Activated T-helper 1 cell treated with anti-CD3 and anti-CD28 coated beads, Interleukin-12 subunit alpha, Interleukin-12 subunit beta, Interleukin-2, Interleukin-4 antibody, amounts not matched to agents 30 ng/mL and 10 ng/mL and 1 ng/mL, durations not matched to agents 14 hours and 24 hours and 36 hours (primary cell): ENCODE measurements at regions of chr15 and their contacts with region 1.

Region 1: DNA sequence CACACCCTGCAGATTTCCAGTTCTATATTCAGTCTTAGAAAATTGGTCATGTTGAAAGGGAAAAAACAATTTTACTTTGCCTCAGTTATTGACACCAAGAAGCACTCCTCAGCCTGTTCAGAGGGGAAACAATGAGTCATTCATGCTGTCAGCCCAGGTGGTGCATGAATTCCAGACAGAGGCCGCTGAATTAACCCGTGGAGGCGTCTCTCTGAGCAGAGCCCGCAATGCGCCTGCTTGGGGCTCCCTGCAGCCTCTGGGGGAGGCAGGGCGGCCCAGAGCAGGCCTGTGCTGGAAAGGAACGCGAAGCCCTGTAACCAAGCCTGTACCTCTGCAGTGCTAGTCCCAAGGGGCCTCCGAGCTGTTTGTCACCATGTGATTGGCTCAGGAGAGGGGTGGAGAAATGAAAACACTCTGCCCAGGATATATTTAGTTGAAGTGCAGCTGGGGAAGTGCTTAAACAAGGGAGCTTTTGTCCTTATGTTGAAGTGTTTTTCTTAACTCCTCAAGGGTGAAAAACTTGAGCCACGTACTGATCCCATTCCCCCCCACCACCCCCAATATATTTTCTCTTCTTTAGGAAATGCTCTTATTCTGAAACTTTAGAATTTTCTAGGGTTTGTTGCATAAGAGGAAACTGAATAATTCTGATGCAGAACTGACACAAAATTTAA is 68.3 kb upstream of the CHD2 start:
- DNase-seq: peak; percentile 90
- H3K4me3 Mint-ChIP-seq: peak overlapping the region; percentile 74
- H3K27ac Mint-ChIP-seq: peak overlapping the region; percentile 99
- H3K4me1 Mint-ChIP-seq: peaks cover 50% of the 10 kb centered on the region
- H3K27me3 Mint-ChIP-seq: no peaks in the 10 kb centered on the region

Region 2: GRCh38 chr15:92803847-92804609 is 27.8 kb before region 1 on chr15:
- intact Hi-C with region 1: loop called (anchors 1 kb)
- DNase-seq: peak; percentile 59
- H3K4me3 Mint-ChIP-seq: peak overlapping the region; percentile 29
- H3K27ac Mint-ChIP-seq: peak overlapping the region; percentile 84
- H3K4me1 Mint-ChIP-seq: peaks cover 45% of the 10 kb centered on the region
- H3K27me3 Mint-ChIP-seq: no peaks in the 10 kb centered on the region

Region 3: GRCh38 chr15:92808978-92809879 is 22.6 kb before region 1 on chr15:
- intact Hi-C with region 1: loop called (anchors 1 kb)
- DNase-seq: peak; percentile 100
- H3K4me3 Mint-ChIP-seq: peak overlapping the region; percentile 94
- H3K27ac Mint-ChIP-seq: peak overlapping the region; percentile 98
- H3K4me1 Mint-ChIP-seq: peaks cover 60% of the 10 kb centered on the region
- H3K27me3 Mint-ChIP-seq: no peaks in the 10 kb centered on the region

Region 4: GRCh38 chr15:92820236-92821021 is 11.4 kb before region 1 on chr15:
- intact Hi-C with region 1: loop called (anchors 1 kb)
- DNase-seq: peak; percentile 86
- H3K4me3 Mint-ChIP-seq: peak overlapping the region; percentile 86
- H3K27ac Mint-ChIP-seq: peak overlapping the region; percentile 96
- H3K4me1 Mint-ChIP-seq: peaks cover 58% of the 10 kb centered on the region
- H3K27me3 Mint-ChIP-seq: no peaks in the 10 kb centered on the region

Region 5: GRCh38 chr15:92845126-92845508 is 13.3 kb after region 1 on chr15:
- intact Hi-C with region 1: loop called (anchors 1 kb)
- DNase-seq: no peak
- H3K4me3 Mint-ChIP-seq: peak overlapping the region; percentile 77
- H3K27ac Mint-ChIP-seq: peak overlapping the region; percentile 96
- H3K4me1 Mint-ChIP-seq: peaks cover 68% of the 10 kb centered on the region
- H3K27me3 Mint-ChIP-seq: no peaks in the 10 kb centered on the region

Region 6: DNA sequence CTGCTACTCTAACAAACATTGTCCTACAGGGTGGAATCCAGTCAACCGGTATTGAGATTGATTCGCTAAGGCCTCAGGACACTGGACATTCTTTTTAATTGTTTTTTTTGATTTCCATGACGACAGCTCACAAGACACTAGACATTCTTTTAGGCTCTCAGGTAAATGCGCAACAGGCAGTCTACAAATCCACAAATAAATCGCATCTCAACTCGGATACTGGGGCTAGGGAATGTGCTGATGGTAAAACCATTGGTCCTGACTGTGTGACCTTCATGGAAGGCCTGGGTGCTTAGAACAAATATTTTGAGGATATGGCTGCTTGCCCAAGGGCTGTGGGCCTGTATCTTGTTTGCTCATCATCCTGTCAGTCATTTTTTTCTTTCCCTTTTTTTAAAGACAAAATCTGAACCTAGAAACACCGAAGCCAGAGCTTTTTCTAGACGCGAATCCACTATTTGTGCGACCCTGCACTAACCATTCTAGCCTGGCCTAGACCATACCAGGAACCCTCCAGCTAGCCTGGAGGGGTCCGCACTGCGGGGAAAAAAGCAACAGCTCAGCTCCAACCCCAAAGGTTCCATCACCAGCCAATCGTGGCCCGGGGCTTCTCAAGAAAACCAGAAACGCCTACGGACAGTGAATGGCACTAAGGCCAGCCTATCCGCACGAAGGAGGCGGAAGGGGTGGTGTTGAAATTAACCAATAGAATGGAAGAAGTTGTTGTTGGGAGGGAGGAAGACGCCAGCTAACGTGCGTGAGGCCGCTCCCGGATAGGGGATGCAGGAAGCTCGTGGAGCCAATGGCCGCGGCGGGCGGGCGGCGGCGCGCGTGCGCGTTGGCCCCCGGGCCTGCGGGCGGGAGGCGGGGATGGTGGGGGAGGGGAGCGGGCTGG is 50.3 kb after region 1 on chr15:
- intact Hi-C with region 1: loop called (anchors 1 kb)
- DNase-seq: peak; percentile 97
- H3K4me3 Mint-ChIP-seq: peak overlapping the region; percentile 87
- H3K27ac Mint-ChIP-seq: peak overlapping the region; percentile 97
- H3K4me1 Mint-ChIP-seq: peaks cover 60% of the 10 kb centered on the region
- H3K27me3 Mint-ChIP-seq: no peaks in the 10 kb centered on the region

Region 7: DNA sequence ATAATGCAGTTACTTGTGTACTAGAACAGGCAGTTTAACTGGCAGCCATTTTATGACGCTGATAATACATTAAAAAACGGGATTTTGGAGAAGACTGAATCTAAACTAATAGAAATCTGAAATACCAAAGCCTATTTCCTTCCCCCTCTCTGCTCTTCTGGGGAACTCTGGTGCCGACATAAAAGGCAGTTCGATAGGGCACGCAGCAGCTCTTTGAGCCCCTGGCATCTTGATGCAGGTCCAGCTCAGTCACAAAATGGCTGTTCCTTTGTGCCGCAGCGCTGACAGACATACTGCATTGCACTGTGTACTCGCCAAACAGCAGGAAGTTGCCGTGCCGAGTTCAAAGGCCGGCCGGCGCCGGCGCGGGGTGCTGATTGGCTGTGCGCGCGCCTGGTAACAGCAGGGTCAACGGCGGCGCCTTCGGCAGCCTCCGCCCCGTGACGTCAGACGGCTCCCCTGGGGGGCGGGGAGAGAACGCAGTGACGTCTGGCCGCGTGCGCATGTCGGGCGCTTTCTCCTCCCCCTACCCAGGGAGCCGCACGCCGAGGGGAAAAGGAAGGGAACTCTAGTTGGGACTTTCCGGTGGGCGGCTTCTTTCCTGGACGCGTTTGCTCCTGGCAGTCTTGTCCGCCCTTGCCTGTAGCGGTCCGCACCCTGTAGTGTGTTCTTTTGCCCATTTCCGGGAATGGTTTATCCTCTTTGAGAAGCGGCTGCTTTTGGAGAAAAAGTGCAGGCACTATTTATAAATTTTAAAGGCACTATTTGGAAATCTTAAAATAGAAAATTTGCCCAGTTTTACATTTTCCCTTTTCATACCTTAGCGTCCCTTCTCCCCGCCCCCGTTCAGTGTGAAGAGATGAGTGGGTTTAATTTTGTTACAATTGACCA is 72.4 kb after region 1 on chr15:
- intact Hi-C with region 1: loop called (anchors 1 kb)
- DNase-seq: peak; percentile 99
- H3K4me3 Mint-ChIP-seq: peak overlapping the region; percentile 93
- H3K27ac Mint-ChIP-seq: peak overlapping the region; percentile 100
- H3K4me1 Mint-ChIP-seq: peaks cover 67% of the 10 kb centered on the region
- H3K27me3 Mint-ChIP-seq: no peaks in the 10 kb centered on the region